ENCODE measurements at regions of chr13 and their contacts with region 1.

Region 1: GRCh38 chr13:80363890-80364503 is 23.1 kb upstream of the SPRY2 start:
- DNase-seq: no peak
- ATAC-seq: no peak
- H3K4me3 ChIP-seq: no peak overlapping the region
- H3K27ac ChIP-seq: no peak overlapping the region
- H3K4me1 ChIP-seq: no peaks in the 10 kb centered on the region
- H3K27me3 ChIP-seq: no peaks in the 10 kb centered on the region
- CTCF ChIP-seq: peak; percentile 62 to 70 (median 62); a peak in 5 of 6 replicates
- EP300 ChIP-seq: no peak
- POLR2A ChIP-seq: no peak
- RAD21 ChIP-seq: peak; percentile 80

Region 2: GRCh38 chr13:79775830-79776229 is 588.2 kb before region 1 on chr13:
- CTCF ChIA-PET with region 1: interaction called, 17 read pairs
- POLR2A ChIA-PET with region 1: interaction called, 3 read pairs
- RAD21 ChIA-PET with region 1: interaction called, 8 read pairs
- SMC1A ChIA-PET with region 1: interaction called, 6 read pairs
- in situ Hi-C with region 1: loop called (anchors 5 kb)
- intact Hi-C with region 1: loop called (anchors 2 kb)
- DNase-seq: no peak
- ATAC-seq: peak; percentile 86
- H3K4me3 ChIP-seq: no peak overlapping the region
- H3K27ac ChIP-seq: no peak overlapping the region
- H3K4me1 ChIP-seq: no peaks in the 10 kb centered on the region
- H3K27me3 ChIP-seq: no peaks in the 10 kb centered on the region
- CTCF ChIP-seq: peak; percentile 60 to 78 (median 65)
- EP300 ChIP-seq: no peak
- POLR2A ChIP-seq: no peak
- RAD21 ChIP-seq: peak; percentile 94

Region 3: DNA sequence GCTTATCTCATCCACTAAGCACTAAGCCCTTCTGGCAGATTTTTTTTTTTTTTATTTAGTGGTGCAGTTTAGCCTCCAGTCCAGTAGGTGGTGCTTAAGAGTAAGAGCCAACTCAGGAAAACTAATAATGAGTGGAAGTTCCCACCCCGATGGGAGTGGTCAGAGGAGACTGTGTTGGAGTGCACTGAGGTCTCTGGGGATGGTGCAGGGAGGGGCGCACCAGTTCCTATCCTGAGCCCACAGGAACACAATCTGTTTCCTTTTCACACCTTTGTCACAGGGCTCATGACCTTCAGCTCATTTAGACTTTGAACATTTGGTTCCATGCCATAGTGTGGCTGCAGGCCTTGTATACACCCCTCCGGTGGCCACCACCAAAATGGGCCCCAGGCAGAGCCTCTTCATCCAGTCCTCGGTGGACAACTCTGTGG is 390.4 kb before region 1 on chr13:
- CTCF ChIA-PET with region 1: no interaction called
- POLR2A ChIA-PET with region 1: no interaction called
- RAD21 ChIA-PET with region 1: no interaction called
- SMC1A ChIA-PET with region 1: no interaction called
- in situ Hi-C with region 1: no loop called
- intact Hi-C with region 1: loop called (anchors 2 kb)
- DNase-seq: no peak
- ATAC-seq: peak; percentile 74
- H3K4me3 ChIP-seq: no peak overlapping the region
- H3K27ac ChIP-seq: no peak overlapping the region
- H3K4me1 ChIP-seq: no peaks in the 10 kb centered on the region
- H3K27me3 ChIP-seq: no peaks in the 10 kb centered on the region
- CTCF ChIP-seq: peak; percentile 37 to 55 (median 51); a peak in 5 of 6 replicates
- EP300 ChIP-seq: no peak
- POLR2A ChIP-seq: no peak
- RAD21 ChIP-seq: peak; percentile 71

Region 4: DNA sequence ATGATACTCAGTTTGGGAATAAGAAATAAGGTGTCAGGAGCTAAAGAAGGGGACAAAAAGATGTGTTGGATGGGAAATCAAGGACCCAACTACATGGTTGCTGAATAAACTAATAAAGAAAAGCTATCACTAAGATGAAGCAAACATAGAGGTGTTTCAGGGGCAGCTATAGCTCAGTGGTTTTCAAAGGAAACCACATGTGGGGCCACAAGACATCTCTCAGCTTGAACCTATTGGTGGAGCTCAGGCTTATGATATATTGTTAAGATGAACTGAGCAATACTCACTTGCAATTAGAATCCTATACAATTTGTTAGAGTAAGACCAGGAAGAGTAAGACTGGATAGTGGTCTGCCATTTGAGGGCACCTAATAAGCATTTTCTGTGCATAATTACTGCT is 22.0 kb after region 1 on chr13:
- CTCF ChIA-PET with region 1: interaction called, 6 read pairs
- POLR2A ChIA-PET with region 1: no interaction called
- RAD21 ChIA-PET with region 1: interaction called, 14 read pairs
- SMC1A ChIA-PET with region 1: interaction called, 23 read pairs
- in situ Hi-C with region 1: no loop called
- intact Hi-C with region 1: no loop called
- DNase-seq: no peak
- ATAC-seq: peak; percentile 91
- H3K4me3 ChIP-seq: no peak overlapping the region
- H3K27ac ChIP-seq: no peak overlapping the region
- H3K4me1 ChIP-seq: no peaks in the 10 kb centered on the region
- H3K27me3 ChIP-seq: no peaks in the 10 kb centered on the region
- CTCF ChIP-seq: no peak
- EP300 ChIP-seq: no peak
- POLR2A ChIP-seq: no peak
- RAD21 ChIP-seq: 0 out of 2 replicates have a peak, but pooled peaks have one; percentile 14

Region 5: GRCh38 chr13:80408270-80408669 is 44.3 kb after region 1 on chr13:
- CTCF ChIA-PET with region 1: interaction called, 24 read pairs
- POLR2A ChIA-PET with region 1: interaction called, 9 read pairs
- RAD21 ChIA-PET with region 1: interaction called, 17 read pairs
- SMC1A ChIA-PET with region 1: interaction called, 8 read pairs
- in situ Hi-C with region 1: no loop called
- intact Hi-C with region 1: no loop called
- DNase-seq: no peak
- ATAC-seq: peak; percentile 75
- H3K4me3 ChIP-seq: no peak overlapping the region
- H3K27ac ChIP-seq: no peak overlapping the region
- H3K4me1 ChIP-seq: no peaks in the 10 kb centered on the region
- H3K27me3 ChIP-seq: no peaks in the 10 kb centered on the region
- CTCF ChIP-seq: 0 out of 6 replicates have a peak, but pooled peaks of 1 of the 3 experiments have one; percentile 17
- EP300 ChIP-seq: no peak
- POLR2A ChIP-seq: no peak
- RAD21 ChIP-seq: no peak

Region 6: GRCh38 chr13:81017513-81018152 is 653.6 kb after region 1 on chr13:
- CTCF ChIA-PET with region 1: interaction called, 7 read pairs
- POLR2A ChIA-PET with region 1: no interaction called
- RAD21 ChIA-PET with region 1: interaction called, 13 read pairs
- SMC1A ChIA-PET with region 1: interaction called, 20 read pairs
- in situ Hi-C with region 1: no loop called
- intact Hi-C with region 1: no loop called
- DNase-seq: no peak
- ATAC-seq: peak; percentile 88
- H3K4me3 ChIP-seq: no peak overlapping the region
- H3K27ac ChIP-seq: no peak overlapping the region
- H3K4me1 ChIP-seq: no peaks in the 10 kb centered on the region
- H3K27me3 ChIP-seq: no peaks in the 10 kb centered on the region
- CTCF ChIP-seq: peak; percentile 38 to 54 (median 39); a peak in 3 of 6 replicates
- EP300 ChIP-seq: no peak
- POLR2A ChIP-seq: no peak
- RAD21 ChIP-seq: peak; percentile 72